CD8-positive, alpha-beta T cell (primary cell): ENCODE measurements at regions of chr19 and their contacts with region 1.

Region 1: GRCh38 chr19:41263850-41264580 is at the start of gene HNRNPUL1:
- DNase-seq: peak; percentile 98 to 100 (median 100)
- ATAC-seq: peak; percentile 62
- H3K4me3 ChIP-seq: peak within 1 kb of the TSS; percentile 71 to 87
- H3K4me3 Mint-ChIP-seq: peak within 1 kb of the TSS; percentile 94
- H3K27ac ChIP-seq: peak within 1 kb of the TSS; percentile 97 to 98
- H3K27ac Mint-ChIP-seq: peak within 1 kb of the TSS; percentile 100
- H3K4me1 ChIP-seq: peaks cover 36% of the 10 kb centered on the region
- H3K4me1 Mint-ChIP-seq: peaks cover 43% of the 10 kb centered on the region
- H3K27me3 ChIP-seq: no peaks in the 10 kb centered on the region
- H3K27me3 Mint-ChIP-seq: no peaks in the 10 kb centered on the region
- CTCF ChIP-seq: no peak
- total RNA-seq, gene HNRNPUL1: 416 to 448 TPM

Region 2: GRCh38 chr19:40425450-40426287 is 838.3 kb before region 1 on chr19 and contains the start of gene SERTAD1:
- CTCF ChIA-PET with region 1: no interaction called
- POLR2A ChIA-PET with region 1: no interaction called
- intact Hi-C with region 1: loop called in 1 of 2 experiments (anchors 5 kb)
- DNase-seq: peak; percentile 100
- ATAC-seq: peak; percentile 93
- H3K4me3 ChIP-seq: peak within 1 kb of the TSS; percentile 72 to 92
- H3K4me3 Mint-ChIP-seq: peak within 1 kb of the TSS; percentile 92
- H3K27ac ChIP-seq: peak within 1 kb of the TSS; percentile 91 to 92
- H3K27ac Mint-ChIP-seq: peak within 1 kb of the TSS; percentile 98
- H3K4me1 ChIP-seq: peaks cover 17% of the 10 kb centered on the region
- H3K4me1 Mint-ChIP-seq: peaks cover 28% of the 10 kb centered on the region
- H3K27me3 ChIP-seq: no peaks in the 10 kb centered on the region
- H3K27me3 Mint-ChIP-seq: no peaks in the 10 kb centered on the region
- CTCF ChIP-seq: peak; percentile 55
- total RNA-seq, gene SERTAD1: 36.7 to 38.7 TPM

Region 3: GRCh38 chr19:40750059-40750873 is 513.7 kb before region 1 on chr19 and contains the start of gene ACTMAP:
- CTCF ChIA-PET with region 1: no interaction called
- POLR2A ChIA-PET with region 1: interaction called, 11 read pairs
- intact Hi-C with region 1: loop called in 1 of 2 experiments (anchors 2 kb)
- DNase-seq: peak; percentile 98 to 100 (median 99)
- ATAC-seq: peak; percentile 87
- H3K4me3 ChIP-seq: peak within 1 kb of the TSS; percentile 75 to 87
- H3K4me3 Mint-ChIP-seq: peak within 1 kb of the TSS; percentile 93
- H3K27ac ChIP-seq: peak within 1 kb of the TSS; percentile 91 to 95
- H3K27ac Mint-ChIP-seq: peak within 1 kb of the TSS; percentile 98
- H3K4me1 ChIP-seq: peaks cover 36% of the 10 kb centered on the region
- H3K4me1 Mint-ChIP-seq: peaks cover 38% of the 10 kb centered on the region
- H3K27me3 ChIP-seq: no peaks in the 10 kb centered on the region
- H3K27me3 Mint-ChIP-seq: no peaks in the 10 kb centered on the region
- CTCF ChIP-seq: no peak
- total RNA-seq, gene ACTMAP: 3.5 to 3.8 TPM

Region 4: DNA sequence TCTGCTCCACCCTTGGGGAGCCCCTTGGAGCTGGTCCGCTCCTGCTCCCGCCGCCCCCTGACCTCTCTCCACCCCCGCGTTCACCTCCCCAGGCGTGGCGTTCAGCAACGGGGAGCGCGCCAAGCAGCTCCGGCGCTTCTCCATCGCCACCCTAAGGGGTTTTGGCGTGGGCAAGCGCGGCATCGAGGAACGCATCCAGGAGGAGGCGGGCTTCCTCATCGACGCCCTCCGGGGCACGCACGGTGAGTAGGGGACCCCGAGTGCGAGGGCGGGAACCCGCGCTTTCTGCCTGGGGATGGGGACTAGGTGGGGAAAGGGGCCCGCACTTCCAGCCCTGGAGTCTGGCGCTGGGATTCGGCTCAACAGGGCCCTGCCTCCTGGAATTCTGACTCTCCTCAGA is 174.1 kb before region 1 on chr19:
- CTCF ChIA-PET with region 1: no interaction called
- POLR2A ChIA-PET with region 1: no interaction called
- intact Hi-C with region 1: no loop called
- DNase-seq: peak in 1 of 9 experiments; percentile 33
- ATAC-seq: no peak
- H3K4me3 ChIP-seq: no peak overlapping the region
- H3K4me3 Mint-ChIP-seq: no peak overlapping the region
- H3K27ac ChIP-seq: no peak overlapping the region
- H3K27ac Mint-ChIP-seq: no peak overlapping the region
- H3K4me1 ChIP-seq: no peaks in the 10 kb centered on the region
- H3K4me1 Mint-ChIP-seq: peaks cover 7% of the 10 kb centered on the region
- H3K27me3 ChIP-seq: peaks cover 5 to 15% of the 10 kb centered on the region in 2 experiments
- H3K27me3 Mint-ChIP-seq: peaks cover 57% of the 10 kb centered on the region
- CTCF ChIP-seq: no peak

Region 5: GRCh38 chr19:41123716-41124294 is 140.2 kb before region 1 on chr19:
- CTCF ChIA-PET with region 1: no interaction called
- POLR2A ChIA-PET with region 1: interaction called, 5 read pairs
- intact Hi-C with region 1: loop called (anchors 1 kb)
- DNase-seq: peak in 1 of 9 experiments; percentile 20
- ATAC-seq: no peak
- H3K4me3 ChIP-seq: no peak overlapping the region
- H3K4me3 Mint-ChIP-seq: no peak overlapping the region
- H3K27ac ChIP-seq: no peak overlapping the region
- H3K27ac Mint-ChIP-seq: peak overlapping the region; percentile 41
- H3K4me1 ChIP-seq: peaks cover 23% of the 10 kb centered on the region
- H3K4me1 Mint-ChIP-seq: peaks cover 44% of the 10 kb centered on the region
- H3K27me3 ChIP-seq: no peaks in the 10 kb centered on the region
- H3K27me3 Mint-ChIP-seq: no peaks in the 10 kb centered on the region
- CTCF ChIP-seq: no peak

Region 6: DNA sequence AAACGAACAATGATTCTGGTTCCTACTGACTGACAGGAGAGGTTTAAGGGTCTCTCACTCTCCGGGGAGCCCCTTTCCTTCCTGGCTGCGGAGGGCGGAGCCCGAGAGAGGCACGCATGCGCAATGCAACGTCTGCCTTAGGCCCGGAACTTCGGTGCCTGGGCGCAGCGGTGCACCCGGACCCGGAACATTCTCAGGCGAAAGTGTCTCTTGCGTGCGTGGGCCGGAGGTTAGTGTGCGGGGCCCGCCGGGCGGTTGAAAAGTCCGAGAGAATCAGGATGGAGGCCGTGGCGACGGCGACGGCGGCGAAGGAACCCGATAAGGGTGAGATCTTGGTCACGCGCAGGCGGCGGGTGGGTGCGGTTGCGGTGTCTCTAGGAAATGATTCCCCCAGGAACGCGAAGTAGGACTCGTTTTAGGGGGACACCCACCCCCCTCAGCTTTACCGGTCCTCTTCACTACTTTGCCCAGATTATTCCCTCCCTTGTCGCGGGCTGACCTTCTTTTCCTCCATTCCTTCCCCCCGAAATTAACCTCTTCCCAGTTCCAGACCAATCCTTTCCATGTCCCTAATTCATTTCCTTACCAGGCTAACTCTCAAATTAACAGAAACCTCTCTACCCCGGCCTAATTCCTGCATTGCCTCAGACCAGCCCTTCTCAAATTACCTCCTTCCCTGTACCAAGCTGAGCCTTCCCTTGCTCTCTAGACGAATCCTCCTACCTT is 46.2 kb after region 1 on chr19 and contains the start of gene CCDC97:
- CTCF ChIA-PET with region 1: interaction called, 105 read pairs
- POLR2A ChIA-PET with region 1: interaction called, 126 read pairs
- intact Hi-C with region 1: loop called (anchors 1 kb)
- DNase-seq: peak; percentile 78 to 96 (median 90)
- ATAC-seq: peak; percentile 61
- H3K4me3 ChIP-seq: peak within 1 kb of the TSS; percentile 66 to 91
- H3K4me3 Mint-ChIP-seq: peak within 1 kb of the TSS; percentile 97
- H3K27ac ChIP-seq: peak within 1 kb of the TSS; percentile 88 to 93
- H3K27ac Mint-ChIP-seq: peak within 1 kb of the TSS; percentile 98
- H3K4me1 ChIP-seq: peaks cover 58% of the 10 kb centered on the region
- H3K4me1 Mint-ChIP-seq: peaks cover 74% of the 10 kb centered on the region
- H3K27me3 ChIP-seq: no peaks in the 10 kb centered on the region
- H3K27me3 Mint-ChIP-seq: no peaks in the 10 kb centered on the region
- CTCF ChIP-seq: no peak
- total RNA-seq, gene CCDC97: 32.0 to 33.5 TPM

Region 7: DNA sequence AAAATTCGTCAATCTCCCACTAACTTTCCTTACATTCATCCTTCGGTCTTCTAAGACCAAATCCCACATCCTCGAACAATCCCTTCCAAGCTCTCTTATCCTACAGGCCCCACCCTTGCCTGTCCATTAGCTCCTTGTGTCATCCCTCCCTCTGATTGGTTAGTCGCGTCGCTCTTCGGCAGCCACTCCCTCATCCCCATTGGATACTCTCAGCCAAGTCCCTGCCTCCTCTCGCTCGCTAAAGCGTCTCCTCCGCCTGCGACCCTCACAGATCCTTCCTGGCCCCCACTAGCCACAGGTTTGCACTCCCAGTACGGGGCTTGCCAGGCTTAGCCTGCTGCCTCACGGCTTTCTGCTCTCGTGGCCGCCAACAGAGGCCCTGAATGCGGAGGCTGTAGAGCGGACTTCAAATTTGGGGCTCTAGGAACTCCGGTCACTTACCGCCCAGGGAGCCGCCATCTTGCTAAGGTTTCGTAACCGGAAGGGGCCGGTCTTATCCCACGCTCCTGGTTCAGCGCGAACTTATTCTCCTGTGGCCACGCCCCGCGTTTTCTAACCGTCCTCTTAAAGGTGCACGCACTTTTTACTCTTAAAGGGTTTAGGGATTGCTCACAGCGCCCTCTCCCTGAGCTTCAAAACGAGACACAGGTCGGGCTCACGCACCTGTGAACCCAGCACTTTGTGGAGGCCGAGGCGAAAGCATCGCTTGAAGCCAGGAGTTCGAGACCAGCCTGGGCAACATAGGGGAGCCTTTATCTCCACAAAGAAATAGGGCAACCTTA is 175.6 kb after region 1 on chr19 and contains the start of gene DMAC2:
- CTCF ChIA-PET with region 1: no interaction called
- POLR2A ChIA-PET with region 1: no interaction called
- intact Hi-C with region 1: loop called in 1 of 2 experiments (anchors 1 kb)
- DNase-seq: peak; percentile 86 to 97 (median 93)
- ATAC-seq: peak; percentile 99
- H3K4me3 ChIP-seq: peak within 1 kb of the TSS; percentile 80 to 98
- H3K4me3 Mint-ChIP-seq: peak within 1 kb of the TSS; percentile 54
- H3K27ac ChIP-seq: peak within 1 kb of the TSS; percentile 66 to 93
- H3K27ac Mint-ChIP-seq: no peak within 1 kb of the TSS
- H3K4me1 ChIP-seq: peaks cover 11% of the 10 kb centered on the region
- H3K4me1 Mint-ChIP-seq: peaks cover 10% of the 10 kb centered on the region
- H3K27me3 ChIP-seq: no peaks in the 10 kb centered on the region
- H3K27me3 Mint-ChIP-seq: peaks cover 12% of the 10 kb centered on the region
- CTCF ChIP-seq: peak; percentile 60
- total RNA-seq, gene DMAC2: 23.2 to 25.7 TPM

Region 8: GRCh38 chr19:41501854-41502253 is 237.8 kb after region 1 on chr19:
- CTCF ChIA-PET with region 1: no interaction called
- POLR2A ChIA-PET with region 1: no interaction called
- intact Hi-C with region 1: no loop called
- DNase-seq: no peak
- ATAC-seq: no peak
- H3K4me3 ChIP-seq: no peak overlapping the region
- H3K4me3 Mint-ChIP-seq: no peak overlapping the region
- H3K27ac ChIP-seq: no peak overlapping the region
- H3K27ac Mint-ChIP-seq: no peak overlapping the region
- H3K4me1 ChIP-seq: no peaks in the 10 kb centered on the region
- H3K4me1 Mint-ChIP-seq: no peaks in the 10 kb centered on the region
- H3K27me3 ChIP-seq: peaks cover 0 to 2% of the 10 kb centered on the region in 2 experiments
- H3K27me3 Mint-ChIP-seq: peaks cover 50% of the 10 kb centered on the region
- CTCF ChIP-seq: no peak